ENCODE measurements at regions of chr19 and their contacts with region 1.

Region 1: DNA sequence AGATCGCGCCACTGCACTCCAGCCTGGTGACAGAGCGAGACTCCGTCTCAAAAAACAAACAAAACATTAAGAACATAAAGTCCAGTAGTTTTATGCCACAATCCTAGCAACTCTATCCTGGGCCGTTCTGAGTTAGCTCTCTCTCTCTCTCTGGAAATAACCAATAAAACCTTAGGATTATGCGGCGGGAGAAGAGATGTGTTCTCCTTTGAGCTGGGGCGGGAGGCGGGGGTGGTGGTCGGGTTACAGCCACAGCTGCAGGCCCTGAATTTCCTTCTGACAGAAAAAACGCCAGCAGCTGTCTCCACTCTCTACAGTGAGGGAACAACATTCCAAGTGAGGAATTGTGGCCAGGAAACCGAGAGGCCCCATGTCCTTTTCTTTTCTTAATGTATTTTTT is 9.1 kb upstream of the PNMA8A start:
- DNase-seq: peak in 1 of 2 donors; percentile 48
- ATAC-seq: peak; percentile 52
- H3K4me3 ChIP-seq: no peak overlapping the region
- H3K27ac ChIP-seq: peak overlapping the region in 1 of 2 donors; percentile 73
- H3K4me1 ChIP-seq: no peaks in the 10 kb centered on the region
- H3K27me3 ChIP-seq: no peaks in the 10 kb centered on the region

Region 2: DNA sequence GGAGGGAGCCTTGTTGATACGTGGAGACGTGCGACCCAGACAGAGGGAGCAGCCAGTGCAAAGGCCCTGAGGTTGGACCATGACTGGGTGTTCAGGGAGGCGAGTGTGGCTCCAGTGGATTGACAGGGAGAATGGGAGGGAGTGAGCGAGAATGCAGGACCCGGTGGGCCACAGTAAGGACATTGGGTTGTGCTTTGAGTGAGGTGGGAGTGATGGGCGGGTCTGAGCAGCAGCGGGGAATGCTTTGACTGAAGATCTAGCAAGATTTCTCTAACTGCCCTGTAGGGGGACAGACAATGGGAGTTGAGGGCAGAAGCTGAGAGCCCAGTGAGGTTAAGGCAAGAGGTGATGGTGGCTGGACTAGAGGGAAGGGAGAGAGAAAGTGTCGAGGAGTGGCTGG is 558.1 kb before region 1 on chr19:
- intact Hi-C with region 1: no loop called
- DNase-seq: no peak
- ATAC-seq: no peak
- H3K4me3 ChIP-seq: no peak overlapping the region
- H3K27ac ChIP-seq: no peak overlapping the region
- H3K4me1 ChIP-seq: no peaks in the 10 kb centered on the region
- H3K27me3 ChIP-seq: no peaks in the 10 kb centered on the region

Region 3: GRCh38 chr19:46339446-46339845 is 141.0 kb before region 1 on chr19:
- intact Hi-C with region 1: no loop called
- DNase-seq: no peak
- ATAC-seq: no peak
- H3K4me3 ChIP-seq: no peak overlapping the region
- H3K27ac ChIP-seq: no peak overlapping the region
- H3K4me1 ChIP-seq: no peaks in the 10 kb centered on the region
- H3K27me3 ChIP-seq: no peaks in the 10 kb centered on the region

Region 4: GRCh38 chr19:46447824-46448223 is 32.6 kb before region 1 on chr19:
- intact Hi-C with region 1: loop called in 1 of 2 experiments (anchors 5 kb)
- DNase-seq: peak in 1 of 2 donors; percentile 65
- ATAC-seq: peak; percentile 71
- H3K4me3 ChIP-seq: no peak overlapping the region
- H3K27ac ChIP-seq: peak overlapping the region; percentile 51 to 85
- H3K4me1 ChIP-seq: peaks cover 3 to 4% of the 10 kb centered on the region in 2 donors
- H3K27me3 ChIP-seq: no peaks in the 10 kb centered on the region